Sciatic nerve (tissue), 2 donors: ENCODE measurements at regions of chrX and their contacts with region 1.

Region 1: DNA sequence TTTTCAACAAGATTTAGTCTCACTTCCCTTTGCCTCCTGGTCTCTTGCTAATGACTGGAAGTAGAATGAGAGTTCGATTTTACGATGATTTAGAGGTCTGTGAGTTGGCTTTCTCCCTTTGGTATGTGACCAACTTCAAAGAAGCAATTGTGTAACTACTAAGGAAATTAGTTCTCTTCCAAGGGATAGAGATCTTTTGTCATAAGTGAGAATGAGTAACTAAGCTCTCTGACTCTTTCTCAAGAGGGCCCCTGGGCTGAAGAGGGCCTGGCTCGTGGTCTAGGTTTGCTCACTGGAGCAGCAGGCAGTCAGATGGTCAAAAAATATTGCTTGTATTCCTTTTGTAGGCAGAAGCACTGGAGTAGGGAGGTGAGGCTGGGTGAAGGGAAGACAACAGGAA is 176.3 kb downstream of the ENOX2 start:
- DNase-seq: no peak
- ATAC-seq: no peak

Region 2: DNA sequence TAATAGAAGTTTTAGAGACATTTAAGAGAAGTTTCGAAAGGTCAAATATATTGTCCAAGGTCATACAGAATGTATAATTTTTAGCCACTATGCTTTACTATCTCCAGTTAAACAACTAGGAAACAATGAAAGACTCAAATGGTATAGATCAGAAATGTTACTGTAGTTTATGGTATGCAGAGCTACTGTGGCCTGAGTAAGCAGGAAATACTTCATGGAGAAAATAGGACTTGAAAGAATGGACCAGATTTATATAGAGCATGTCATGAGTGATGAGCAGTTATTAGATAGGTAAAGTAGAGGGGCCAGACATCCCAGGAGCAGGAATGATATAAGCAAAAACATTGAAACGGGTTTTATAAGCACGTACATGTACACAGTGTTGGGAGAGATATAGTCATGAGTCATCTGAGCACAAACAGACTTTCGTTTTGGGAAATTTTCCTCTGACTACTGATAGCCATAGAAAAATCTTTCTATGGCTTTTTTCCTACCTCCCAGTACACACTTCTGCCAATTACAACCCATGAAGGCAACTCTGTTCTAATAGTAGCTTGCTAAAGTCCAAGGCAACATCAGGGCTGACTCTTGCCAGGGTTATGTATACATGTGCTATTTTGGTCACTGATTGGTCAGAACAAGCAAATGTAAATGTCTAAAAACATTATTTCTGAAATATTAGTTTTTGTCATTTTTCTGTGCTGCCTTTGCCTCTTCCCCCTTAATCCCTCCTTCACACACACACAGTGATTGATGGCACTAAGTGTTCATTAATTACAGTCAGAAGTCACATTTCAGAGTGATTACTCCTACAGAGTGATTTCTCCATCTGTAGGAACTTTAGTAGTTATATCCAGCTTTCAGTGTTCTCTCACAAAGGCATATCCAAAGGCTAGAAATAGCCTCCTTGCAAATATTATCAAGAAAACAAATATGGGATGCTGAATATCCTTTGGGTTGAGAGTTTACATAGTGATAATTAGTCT is 22.3 kb before region 1 on chrX:
- intact Hi-C with region 1: loop called (anchors 1 kb)
- DNase-seq: no peak
- ATAC-seq: no peak